ENCODE measurements at regions of chr18 and their contacts with region 1.

Region 1: GRCh38 chr18:12702221-12703095 is at the starts of genes CEP76 and PSMG2:
- DNase-seq: peak; percentile 85
- H3K4me3 Mint-ChIP-seq: peak within 1 kb of the TSS; percentile 94
- H3K27ac Mint-ChIP-seq: peak within 1 kb of the TSS; percentile 91
- H3K4me1 Mint-ChIP-seq: peaks cover 51% of the 10 kb centered on the region
- H3K27me3 Mint-ChIP-seq: no peaks in the 10 kb centered on the region
- total RNA-seq, gene CEP76: 14.8 TPM
- total RNA-seq, gene PSMG2: 115 to 118 TPM

Region 2: GRCh38 chr18:12376718-12377555 is 325.5 kb before region 1 on chr18 and contains the start of gene AFG3L2:
- CTCF ChIA-PET with region 1: interaction called, 3 read pairs
- POLR2A ChIA-PET with region 1: interaction called, 34 read pairs
- DNase-seq: peak; percentile 100
- H3K4me3 Mint-ChIP-seq: peak within 1 kb of the TSS; percentile 91
- H3K27ac Mint-ChIP-seq: peak within 1 kb of the TSS; percentile 91
- H3K4me1 Mint-ChIP-seq: peaks cover 47% of the 10 kb centered on the region
- H3K27me3 Mint-ChIP-seq: peaks cover 2% of the 10 kb centered on the region
- total RNA-seq, gene AFG3L2: 31.9 to 32.8 TPM

Region 3: GRCh38 chr18:12397254-12397653 is 305.2 kb before region 1 on chr18:
- CTCF ChIA-PET with region 1: no interaction called
- POLR2A ChIA-PET with region 1: no interaction called
- DNase-seq: no peak
- H3K4me3 Mint-ChIP-seq: no peak overlapping the region
- H3K27ac Mint-ChIP-seq: no peak overlapping the region
- H3K4me1 Mint-ChIP-seq: peaks cover under 1% of the 10 kb centered on the region
- H3K27me3 Mint-ChIP-seq: peaks cover 13% of the 10 kb centered on the region

Region 4: GRCh38 chr18:12721495-12722275 is 19.2 kb after region 1 on chr18:
- CTCF ChIA-PET with region 1: no interaction called
- POLR2A ChIA-PET with region 1: interaction called, 11 read pairs
- DNase-seq: no peak
- H3K4me3 Mint-ChIP-seq: no peak overlapping the region
- H3K27ac Mint-ChIP-seq: peak overlapping the region; percentile 58
- H3K4me1 Mint-ChIP-seq: peaks cover 20% of the 10 kb centered on the region
- H3K27me3 Mint-ChIP-seq: no peaks in the 10 kb centered on the region

Region 5: DNA sequence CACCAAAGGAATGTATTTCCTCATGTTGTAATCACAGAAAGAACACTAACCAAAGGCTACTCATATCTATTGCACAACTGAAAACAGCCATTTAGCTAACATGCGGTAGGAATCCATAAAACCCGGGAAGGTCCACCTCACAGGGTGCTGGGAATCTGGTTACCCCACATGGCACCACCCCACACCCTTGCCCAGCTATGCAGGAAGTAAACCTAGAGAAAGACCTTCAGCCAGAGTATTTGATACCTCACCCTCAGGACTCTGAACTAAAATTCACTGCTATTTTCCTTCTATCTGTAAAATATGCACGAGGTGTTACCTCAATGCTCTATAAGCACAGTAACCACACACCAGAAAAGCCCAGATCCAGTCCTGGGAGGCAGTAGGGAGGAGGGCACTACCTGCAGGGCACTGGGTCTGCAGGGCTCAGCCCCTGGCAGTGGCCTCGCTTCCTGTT is 135.7 kb after region 1 on chr18:
- CTCF ChIA-PET with region 1: no interaction called
- POLR2A ChIA-PET with region 1: interaction called, 13 read pairs
- DNase-seq: peak; percentile 37
- H3K4me3 Mint-ChIP-seq: peak overlapping the region; percentile 78
- H3K27ac Mint-ChIP-seq: peak overlapping the region; percentile 100
- H3K4me1 Mint-ChIP-seq: peaks cover 66% of the 10 kb centered on the region
- H3K27me3 Mint-ChIP-seq: no peaks in the 10 kb centered on the region

Region 6: GRCh38 chr18:12947355-12948041 is 245.0 kb after region 1 on chr18 and contains the start of gene SEH1L:
- CTCF ChIA-PET with region 1: interaction called, 3 read pairs
- POLR2A ChIA-PET with region 1: interaction called, 13 read pairs
- DNase-seq: peak; percentile 99
- H3K4me3 Mint-ChIP-seq: peak within 1 kb of the TSS; percentile 96
- H3K27ac Mint-ChIP-seq: peak within 1 kb of the TSS; percentile 98
- H3K4me1 Mint-ChIP-seq: peaks cover 42% of the 10 kb centered on the region
- H3K27me3 Mint-ChIP-seq: no peaks in the 10 kb centered on the region
- total RNA-seq, gene SEH1L: 36.3 to 41.6 TPM

Measured in activated CD4-positive, alpha-beta memory T cell treated with anti-CD3 and anti-CD28 coated beads, Interleukin-2, amount 10 ng/mL, durations not matched to agents 7 days and 5 days (primary cell).